HCT116 (cell line): ENCODE measurements at regions of chr15 and their contacts with region 1.

Region 1: DNA sequence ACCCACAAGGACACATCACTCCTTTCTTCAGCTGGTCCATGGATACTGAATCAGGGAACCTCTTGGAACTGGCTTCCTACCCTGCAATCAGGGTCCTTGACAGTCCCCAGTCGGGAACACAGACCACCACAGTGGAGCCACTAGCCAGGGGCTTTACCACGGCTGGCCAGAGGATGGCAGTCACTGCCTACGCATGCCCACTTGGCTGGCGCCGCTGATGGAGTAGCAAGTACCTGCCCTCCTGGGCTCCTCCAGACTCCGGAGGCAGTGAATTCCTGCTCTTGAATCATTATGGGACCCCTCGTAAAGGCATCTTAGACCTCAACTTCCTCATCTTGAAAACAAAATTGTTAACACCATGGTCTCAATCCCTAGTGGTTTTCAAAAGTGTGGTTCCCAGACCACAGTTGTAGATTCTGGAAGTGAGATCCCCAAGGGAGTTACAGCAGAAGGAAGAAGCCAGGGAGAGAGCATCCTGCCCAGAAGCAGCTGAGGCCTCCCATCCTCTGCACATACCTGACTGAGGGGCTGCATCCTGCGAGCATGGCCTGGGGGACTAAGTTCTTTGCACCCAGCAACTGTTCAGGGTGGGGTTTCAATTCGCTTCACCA is 9.1 kb upstream of the SKIC8 start:
- DNase-seq: peak; percentile 54
- ATAC-seq: peak; percentile 97
- H3K4me3 ChIP-seq: peak overlapping the region; percentile 20 to 43
- H3K27ac ChIP-seq: no peak overlapping the region
- H3K4me1 ChIP-seq: peaks cover 4 to 16% of the 10 kb centered on the region in 2 experiments; a peak in 3 of 4 replicates
- H3K27me3 ChIP-seq: no peaks in the 10 kb centered on the region
- CTCF ChIP-seq: peak; percentile 86 to 98 (median 96)
- POLR2A ChIP-seq: no peak
- RAD21 ChIP-seq: peak; percentile 97

Region 2: DNA sequence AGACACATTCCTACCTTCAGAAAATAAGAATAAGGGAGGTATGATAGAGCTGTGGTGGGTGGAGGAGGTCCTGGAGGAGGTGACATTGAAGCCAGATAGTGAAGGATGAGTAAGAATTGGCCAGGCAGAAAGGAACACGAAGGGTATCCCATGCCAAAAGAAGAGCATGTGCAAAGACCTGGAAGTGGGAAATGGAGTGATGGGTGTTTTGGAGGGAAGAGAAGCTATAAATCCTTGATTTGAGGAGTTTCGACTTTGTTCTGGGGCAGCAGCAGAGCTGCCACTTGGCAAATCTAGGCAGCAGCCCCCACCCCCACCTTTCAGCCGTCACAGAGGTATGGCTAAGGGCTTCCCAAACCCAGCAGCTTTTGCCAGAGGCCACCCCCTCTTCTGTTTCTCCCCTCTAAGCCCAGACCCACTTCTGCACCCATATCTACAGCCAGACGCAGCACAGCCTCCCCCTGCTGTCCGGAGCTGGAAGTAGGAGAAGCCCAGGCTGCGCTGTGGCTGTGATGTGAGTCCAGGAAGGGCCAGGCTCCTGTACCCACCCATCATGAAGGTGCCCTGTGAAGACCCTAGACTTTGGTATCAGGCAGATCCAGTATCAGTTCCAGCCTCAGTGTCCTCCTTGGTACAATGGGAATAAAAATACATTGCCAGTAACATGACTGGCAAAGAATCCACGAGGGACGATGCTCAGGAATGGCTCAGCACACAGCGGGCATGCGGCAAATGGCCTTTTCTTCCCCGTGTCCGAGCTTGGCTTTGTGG is 487.2 kb before region 1 on chr15:
- CTCF ChIA-PET with region 1: no interaction called
- POLR2A ChIA-PET with region 1: no interaction called
- RAD21 ChIA-PET with region 1: no interaction called
- intact Hi-C with region 1: no loop called
- DNase-seq: peak; percentile 37
- ATAC-seq: peak; percentile 73
- H3K4me3 ChIP-seq: no peak overlapping the region
- H3K27ac ChIP-seq: no peak overlapping the region
- H3K4me1 ChIP-seq: peaks cover 0 to 12% of the 10 kb centered on the region in 2 experiments; a peak in 2 of 4 replicates
- H3K27me3 ChIP-seq: no peaks in the 10 kb centered on the region; the same call in 1 of the 2 replicates
- CTCF ChIP-seq: peak; percentile 87 to 93 (median 90)
- POLR2A ChIP-seq: no peak
- RAD21 ChIP-seq: peak; percentile 87

Region 3: GRCh38 chr15:77974098-77974414 is 334.5 kb before region 1 on chr15:
- CTCF ChIA-PET with region 1: no interaction called
- POLR2A ChIA-PET with region 1: no interaction called
- RAD21 ChIA-PET with region 1: no interaction called
- intact Hi-C with region 1: no loop called
- DNase-seq: no peak
- ATAC-seq: 0 out of 2 replicates have a peak, but pooled peaks have one; percentile 29
- H3K4me3 ChIP-seq: no peak overlapping the region
- H3K27ac ChIP-seq: no peak overlapping the region
- H3K4me1 ChIP-seq: no peaks in the 10 kb centered on the region; a peak in 1 of 4 replicates
- H3K27me3 ChIP-seq: no peaks in the 10 kb centered on the region
- CTCF ChIP-seq: no peak
- POLR2A ChIP-seq: no peak
- RAD21 ChIP-seq: no peak

Region 4: DNA sequence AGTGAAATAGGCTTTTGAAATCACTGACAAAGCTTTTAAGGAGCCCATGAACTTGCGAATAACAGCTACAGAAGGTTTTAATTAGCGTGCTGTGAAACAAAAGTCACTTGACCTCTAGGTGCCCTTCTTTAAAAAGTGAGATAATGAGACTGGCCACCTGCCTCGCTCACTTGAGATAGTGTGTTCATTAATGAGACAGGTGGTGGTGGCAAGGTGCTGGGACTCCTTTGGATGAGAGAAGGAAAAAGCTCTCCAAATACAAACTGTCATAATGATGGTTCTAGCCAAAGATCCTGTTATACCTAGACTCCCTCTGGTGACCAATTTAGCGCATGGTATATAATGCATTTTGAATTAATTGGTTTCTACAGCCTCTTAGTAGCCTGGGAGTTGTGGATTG is 106.8 kb after region 1 on chr15:
- CTCF ChIA-PET with region 1: interaction called, 27 read pairs
- POLR2A ChIA-PET with region 1: no interaction called
- RAD21 ChIA-PET with region 1: interaction called in 1 of 2 experiments, 4 read pairs
- intact Hi-C with region 1: loop called (anchors 1 kb)
- DNase-seq: peak; percentile 28
- ATAC-seq: peak; percentile 88
- H3K4me3 ChIP-seq: no peak overlapping the region
- H3K27ac ChIP-seq: no peak overlapping the region
- H3K4me1 ChIP-seq: peaks cover 0 to 14% of the 10 kb centered on the region in 2 experiments; a peak in 1 of 4 replicates
- H3K27me3 ChIP-seq: no peaks in the 10 kb centered on the region; the same call in 1 of the 2 replicates
- CTCF ChIP-seq: peak; percentile 24 to 60 (median 46); a peak in 4 of 6 replicates
- POLR2A ChIP-seq: no peak
- RAD21 ChIP-seq: peak; percentile 74

Region 5: GRCh38 chr15:78422571-78423340 is 114.2 kb after region 1 on chr15:
- CTCF ChIA-PET with region 1: interaction called, 28 read pairs
- POLR2A ChIA-PET with region 1: no interaction called
- RAD21 ChIA-PET with region 1: no interaction called
- intact Hi-C with region 1: loop called (anchors 1 kb)
- DNase-seq: peak; percentile 47
- ATAC-seq: peak; percentile 96
- H3K4me3 ChIP-seq: no peak overlapping the region
- H3K27ac ChIP-seq: no peak overlapping the region
- H3K4me1 ChIP-seq: peaks cover 0 to 14% of the 10 kb centered on the region in 2 experiments; a peak in 1 of 4 replicates
- H3K27me3 ChIP-seq: no peaks in the 10 kb centered on the region
- CTCF ChIP-seq: peak; percentile 61 to 98 (median 97)
- POLR2A ChIP-seq: no peak
- RAD21 ChIP-seq: peak; percentile 65

Region 6: GRCh38 chr15:78481917-78482316 is 173.4 kb after region 1 on chr15:
- CTCF ChIA-PET with region 1: no interaction called
- POLR2A ChIA-PET with region 1: no interaction called
- RAD21 ChIA-PET with region 1: no interaction called
- intact Hi-C with region 1: loop called (anchors 1 kb)
- DNase-seq: no peak
- ATAC-seq: no peak
- H3K4me3 ChIP-seq: no peak overlapping the region
- H3K27ac ChIP-seq: no peak overlapping the region
- H3K4me1 ChIP-seq: no peaks in the 10 kb centered on the region
- H3K27me3 ChIP-seq: no peaks in the 10 kb centered on the region
- CTCF ChIP-seq: no peak
- POLR2A ChIP-seq: no peak
- RAD21 ChIP-seq: no peak

Region 7: GRCh38 chr15:78709263-78709882 is 400.8 kb after region 1 on chr15:
- CTCF ChIA-PET with region 1: interaction called, 14 read pairs
- POLR2A ChIA-PET with region 1: no interaction called
- RAD21 ChIA-PET with region 1: interaction called in 1 of 2 experiments, 4 read pairs
- intact Hi-C with region 1: loop called (anchors 5 kb)
- DNase-seq: peak; percentile 36
- ATAC-seq: peak; percentile 99
- H3K4me3 ChIP-seq: peak overlapping the region in 1 of 2 experiments; percentile 20; a peak in 1 of 4 replicates
- H3K27ac ChIP-seq: no peak overlapping the region
- H3K4me1 ChIP-seq: peaks cover 2 to 9% of the 10 kb centered on the region in 2 experiments; a peak in 2 of 4 replicates
- H3K27me3 ChIP-seq: no peaks in the 10 kb centered on the region
- CTCF ChIP-seq: peak; percentile 85 to 92 (median 87)
- POLR2A ChIP-seq: no peak
- RAD21 ChIP-seq: peak; percentile 95

Region 8: GRCh38 chr15:78750566-78750965 is 442.0 kb after region 1 on chr15:
- CTCF ChIA-PET with region 1: interaction called, 9 read pairs
- POLR2A ChIA-PET with region 1: no interaction called
- RAD21 ChIA-PET with region 1: no interaction called
- intact Hi-C with region 1: loop called (anchors 2 kb)
- DNase-seq: no peak
- ATAC-seq: peak; percentile 24
- H3K4me3 ChIP-seq: peak overlapping the region in 1 of 2 experiments; percentile 30; a peak in 1 of 4 replicates
- H3K27ac ChIP-seq: no peak overlapping the region
- H3K4me1 ChIP-seq: peaks cover 0 to 6% of the 10 kb centered on the region in 2 experiments; a peak in 1 of 4 replicates
- H3K27me3 ChIP-seq: no peaks in the 10 kb centered on the region
- CTCF ChIP-seq: no peak
- POLR2A ChIP-seq: no peak
- RAD21 ChIP-seq: no peak